Stomach (tissue), 19 donors: ENCODE measurements at regions of chr11 and their contacts with region 1.

Region 1: GRCh38 chr11:133078591-133079404 is 453.5 kb downstream of the OPCML start:
- DNase-seq: peak; percentile 60 to 65
- H3K4me3 ChIP-seq: no peak overlapping the region
- H3K27ac ChIP-seq: no peak overlapping the region
- H3K4me1 ChIP-seq: peaks cover 4 to 16% (median 9%) of the 10 kb centered on the region in 4 donors
- H3K27me3 ChIP-seq: peaks cover 0 to 67% (median 43%) of the 10 kb centered on the region in 3 donors
- CTCF ChIP-seq: peak in 5 of 7 experiments; percentile 58 to 74 (median 70)
- EP300 ChIP-seq: no peak
- POLR2A ChIP-seq: no peak

Region 2: DNA sequence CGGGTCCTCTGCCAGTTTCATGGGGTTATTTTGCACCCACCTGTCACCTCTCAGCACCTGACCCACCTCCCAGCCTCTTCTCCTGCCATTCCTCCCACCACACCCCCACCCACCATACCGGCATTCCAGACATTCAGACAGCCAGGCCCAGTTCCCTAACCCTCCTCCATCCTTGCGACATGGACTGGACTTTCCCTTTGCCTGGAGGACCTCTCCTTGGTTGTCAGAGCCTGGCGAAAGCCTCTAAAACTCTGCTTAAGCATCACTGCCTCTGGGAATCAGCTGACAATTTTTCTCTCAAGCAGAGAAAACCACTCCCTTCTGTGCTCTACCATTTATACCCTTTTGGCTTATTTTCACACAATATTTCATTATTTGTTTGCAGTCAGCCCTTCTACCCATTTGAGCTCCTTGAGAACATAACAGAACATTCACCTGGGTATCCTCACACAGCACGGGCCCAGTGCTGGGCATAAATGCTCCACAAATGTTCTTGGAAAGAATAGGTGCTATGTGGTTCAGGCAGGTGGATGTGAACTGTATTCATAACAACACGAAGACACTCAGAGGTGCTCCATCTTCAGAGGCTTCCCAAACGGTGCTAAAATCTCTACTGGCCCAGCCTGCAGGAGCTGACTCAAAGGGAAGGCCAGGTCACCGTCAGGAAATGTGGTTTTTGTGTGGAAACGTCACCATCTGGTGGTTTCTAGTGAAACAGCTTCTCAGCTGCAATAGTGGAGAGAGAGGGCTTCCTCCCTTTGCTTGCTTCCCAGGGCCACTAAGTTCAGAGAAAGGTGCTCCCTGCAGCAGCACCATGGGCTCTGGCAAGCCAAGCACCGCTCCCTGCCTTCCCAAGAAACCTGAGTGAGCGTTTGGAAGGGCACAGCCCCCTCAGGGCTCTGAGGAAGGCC is 756.1 kb after region 1 on chr11:
- intact Hi-C with region 1: loop called (anchors 10 kb)
- DNase-seq: peak in 1 of 2 donors; percentile 81
- H3K4me3 ChIP-seq: no peak overlapping the region
- H3K27ac ChIP-seq: no peak overlapping the region
- H3K4me1 ChIP-seq: peaks cover 0 to 12% (median 0%) of the 10 kb centered on the region in 4 donors
- H3K27me3 ChIP-seq: peaks cover 0 to 22% (median 7%) of the 10 kb centered on the region in 3 donors
- CTCF ChIP-seq: peak in 5 of 7 experiments; percentile 32 to 69 (median 48)
- EP300 ChIP-seq: no peak
- POLR2A ChIP-seq: no peak